Calu3 (cell line): ENCODE measurements at regions of chr1 and their contacts with region 1.

Region 1: DNA sequence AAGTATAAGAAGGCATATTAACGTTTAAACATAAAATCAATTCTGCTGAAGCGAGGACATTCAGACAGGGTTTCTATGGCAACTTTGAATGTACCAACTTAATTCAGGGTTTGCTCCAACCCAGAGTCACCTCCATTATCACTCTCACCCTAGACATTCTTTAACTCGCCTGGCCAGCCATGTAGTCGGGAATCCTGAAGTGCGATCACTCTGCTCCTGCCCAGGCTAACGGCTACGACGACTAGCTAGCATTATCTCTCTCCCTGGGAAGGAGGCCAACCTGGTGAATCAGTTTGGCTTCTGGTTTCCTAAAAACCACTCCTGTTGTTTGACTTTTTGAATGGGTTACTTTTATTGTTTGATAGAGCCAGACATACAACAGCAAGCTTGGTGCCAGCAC is 38.9 kb upstream of the ZBTB18 start:
- DNase-seq: peak; percentile 7
- H3K4me3 Mint-ChIP-seq: no peak overlapping the region
- H3K27ac Mint-ChIP-seq: no peak overlapping the region
- H3K4me1 Mint-ChIP-seq: peaks cover 8% of the 10 kb centered on the region
- H3K27me3 Mint-ChIP-seq: no peaks in the 10 kb centered on the region
- CTCF ChIP-seq: no peak

Region 2: GRCh38 chr1:243390162-243390791 is 621.9 kb before region 1 on chr1:
- CTCF ChIA-PET with region 1: interaction called, 11 read pairs
- intact Hi-C with region 1: no loop called
- DNase-seq: no peak
- H3K4me3 Mint-ChIP-seq: no peak overlapping the region
- H3K27ac Mint-ChIP-seq: no peak overlapping the region
- H3K4me1 Mint-ChIP-seq: peaks cover 50% of the 10 kb centered on the region
- H3K27me3 Mint-ChIP-seq: no peaks in the 10 kb centered on the region
- CTCF ChIP-seq: no peak